ENCODE measurements at regions of chr10 and their contacts with region 1.

Region 1: DNA sequence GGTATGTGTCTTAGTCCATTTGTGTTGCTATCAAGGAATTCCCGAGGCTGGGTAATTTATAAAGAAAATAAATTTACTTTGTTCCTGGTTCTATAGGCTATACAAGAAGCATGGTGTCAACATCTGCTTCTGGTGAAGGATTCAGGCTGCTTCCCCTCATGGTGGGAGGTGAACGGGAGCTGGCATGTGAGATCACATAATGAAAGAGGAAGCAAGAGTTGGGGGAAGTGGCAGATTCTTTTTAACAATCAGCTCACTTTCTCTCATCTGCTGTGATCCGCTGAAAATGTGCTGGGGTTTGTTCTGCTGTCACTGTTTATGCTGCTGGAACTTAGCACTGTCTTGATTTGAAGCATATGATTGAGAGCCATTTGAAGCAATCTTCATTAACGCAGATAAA is 730.0 kb upstream of the SORCS1 start:
- DNase-seq: no peak
- ATAC-seq: peak; percentile 97
- H3K4me3 ChIP-seq: no peak overlapping the region
- H3K27ac ChIP-seq: no peak overlapping the region
- H3K4me1 ChIP-seq: no peaks in the 10 kb centered on the region
- H3K27me3 ChIP-seq: no peaks in the 10 kb centered on the region
- CTCF ChIP-seq: no peak
- EP300 ChIP-seq: no peak
- POLR2A ChIP-seq: no peak
- RAD21 ChIP-seq: no peak

Region 2: DNA sequence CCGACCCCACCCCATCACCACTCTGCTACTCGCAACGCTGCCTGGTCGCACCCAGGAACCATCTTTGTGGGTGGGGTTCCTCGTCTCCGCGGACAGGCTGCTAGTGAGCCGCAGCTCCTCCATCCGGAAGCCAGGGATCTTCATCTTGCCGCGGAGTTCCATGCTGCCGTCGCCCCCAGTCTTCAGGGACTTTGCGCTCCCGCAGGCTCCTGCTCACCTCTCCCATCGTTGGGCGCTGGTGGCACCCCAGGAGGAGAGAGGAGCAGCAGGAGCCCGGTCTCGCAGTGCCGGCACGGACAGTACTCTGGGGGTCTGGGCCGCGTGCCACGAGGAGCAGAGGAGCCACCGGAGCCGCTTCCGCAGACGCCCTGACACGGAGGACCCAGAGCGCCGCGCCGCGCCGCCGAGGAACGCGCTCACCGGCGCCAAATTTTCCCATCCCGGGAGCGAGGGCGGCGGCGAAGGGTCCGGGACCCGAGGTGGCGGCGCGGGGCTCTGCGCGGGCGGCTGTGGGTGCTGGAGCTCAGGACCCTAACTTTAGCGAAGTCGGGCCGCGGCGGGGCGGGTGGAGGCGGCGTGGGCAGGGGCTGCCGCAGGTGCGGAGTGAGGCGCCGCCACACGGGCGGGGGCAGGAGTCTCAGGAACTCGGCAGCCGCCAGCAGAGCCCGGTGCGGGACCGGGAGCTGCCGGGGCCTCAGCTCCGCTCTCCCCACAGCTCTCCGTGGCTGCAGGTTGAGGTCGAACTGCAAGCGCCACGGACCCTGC is 20.1 kb after region 1 on chr10:
- CTCF ChIA-PET with region 1: interaction called, 10 read pairs
- POLR2A ChIA-PET with region 1: no interaction called
- RAD21 ChIA-PET with region 1: interaction called, 4 read pairs
- SMC1A ChIA-PET with region 1: interaction called, 20 read pairs
- in situ Hi-C with region 1: no loop called
- intact Hi-C with region 1: no loop called
- DNase-seq: no peak
- ATAC-seq: peak; percentile 73
- H3K4me3 ChIP-seq: no peak overlapping the region
- H3K27ac ChIP-seq: no peak overlapping the region
- H3K4me1 ChIP-seq: no peaks in the 10 kb centered on the region
- H3K27me3 ChIP-seq: no peaks in the 10 kb centered on the region
- CTCF ChIP-seq: no peak; a peak in 1 of 6 replicates
- EP300 ChIP-seq: no peak
- POLR2A ChIP-seq: no peak
- RAD21 ChIP-seq: no peak

Region 3: GRCh38 chr10:108184114-108184513 is 289.6 kb after region 1 on chr10:
- CTCF ChIA-PET with region 1: no interaction called
- POLR2A ChIA-PET with region 1: no interaction called
- RAD21 ChIA-PET with region 1: no interaction called
- SMC1A ChIA-PET with region 1: no interaction called
- in situ Hi-C with region 1: no loop called
- intact Hi-C with region 1: no loop called
- DNase-seq: no peak
- ATAC-seq: no peak
- H3K4me3 ChIP-seq: no peak overlapping the region
- H3K27ac ChIP-seq: no peak overlapping the region
- H3K4me1 ChIP-seq: no peaks in the 10 kb centered on the region
- H3K27me3 ChIP-seq: no peaks in the 10 kb centered on the region
- CTCF ChIP-seq: no peak
- EP300 ChIP-seq: no peak
- POLR2A ChIP-seq: no peak
- RAD21 ChIP-seq: no peak